Activated CD4-positive, alpha-beta memory T cell treated with anti-CD3 and anti-CD28 coated beads for 36 hours (primary cell): ENCODE measurements at regions of chr9 and their contacts with region 1.

Region 1: DNA sequence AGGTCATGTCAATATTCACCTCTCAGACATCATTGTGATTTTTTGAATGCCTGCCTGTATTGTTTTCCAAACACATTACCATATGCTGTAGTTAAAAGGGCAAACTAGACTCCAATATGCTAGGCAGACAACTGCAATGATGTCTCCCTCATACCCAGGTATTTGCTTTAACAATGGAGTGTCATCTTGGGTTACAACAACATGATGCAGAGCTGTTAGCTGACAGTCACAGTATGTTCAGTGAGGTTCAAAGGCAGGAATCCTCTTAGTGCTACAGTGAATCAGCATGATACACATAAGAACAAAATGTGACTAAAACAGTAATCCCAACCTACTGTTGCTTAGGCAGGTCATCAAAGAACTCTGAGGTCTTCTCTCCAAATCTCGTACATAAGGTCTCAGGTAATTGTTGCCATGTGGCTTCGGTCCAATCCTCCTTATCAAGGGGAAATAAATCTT is 24.0 kb downstream of the OR1J1 start:
- DNase-seq: no peak
- H3K4me3 Mint-ChIP-seq: no peak overlapping the region
- H3K27ac Mint-ChIP-seq: no peak overlapping the region
- H3K4me1 Mint-ChIP-seq: no peaks in the 10 kb centered on the region
- H3K27me3 Mint-ChIP-seq: peaks cover 8% of the 10 kb centered on the region

Region 2: DNA sequence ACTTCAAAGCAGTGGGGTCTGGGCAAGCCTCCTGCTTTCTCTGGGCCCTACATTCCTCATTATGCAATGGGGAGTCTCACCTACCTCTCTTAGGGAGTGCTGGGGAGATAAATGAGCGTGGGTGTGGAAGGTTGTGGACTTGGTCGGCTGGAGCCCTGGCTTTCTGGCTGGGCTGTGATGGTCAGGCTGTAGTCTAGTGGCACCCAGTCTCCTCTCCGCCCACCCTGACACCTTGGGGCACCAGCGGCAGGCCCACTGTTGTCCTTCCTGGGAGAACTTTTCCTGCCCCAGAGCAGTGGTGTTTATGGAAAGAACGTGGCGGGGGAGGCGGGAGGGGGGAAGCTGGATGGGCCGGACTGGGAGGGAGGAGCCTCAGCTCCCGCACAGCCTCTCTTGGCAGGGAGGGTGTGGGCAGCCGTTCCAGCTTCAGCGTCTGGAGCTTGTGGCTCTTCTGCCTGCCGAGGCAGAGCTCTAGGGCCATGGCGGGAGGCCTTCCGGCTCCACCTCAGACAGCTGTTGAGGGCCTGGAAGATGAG is 78.8 kb before region 1 on chr9:
- CTCF ChIA-PET with region 1: no interaction called
- POLR2A ChIA-PET with region 1: no interaction called
- intact Hi-C with region 1: loop called (anchors 5 kb)
- DNase-seq: no peak
- H3K4me3 Mint-ChIP-seq: no peak overlapping the region
- H3K27ac Mint-ChIP-seq: no peak overlapping the region
- H3K4me1 Mint-ChIP-seq: peaks cover 9% of the 10 kb centered on the region
- H3K27me3 Mint-ChIP-seq: peaks cover 23% of the 10 kb centered on the region

Region 3: DNA sequence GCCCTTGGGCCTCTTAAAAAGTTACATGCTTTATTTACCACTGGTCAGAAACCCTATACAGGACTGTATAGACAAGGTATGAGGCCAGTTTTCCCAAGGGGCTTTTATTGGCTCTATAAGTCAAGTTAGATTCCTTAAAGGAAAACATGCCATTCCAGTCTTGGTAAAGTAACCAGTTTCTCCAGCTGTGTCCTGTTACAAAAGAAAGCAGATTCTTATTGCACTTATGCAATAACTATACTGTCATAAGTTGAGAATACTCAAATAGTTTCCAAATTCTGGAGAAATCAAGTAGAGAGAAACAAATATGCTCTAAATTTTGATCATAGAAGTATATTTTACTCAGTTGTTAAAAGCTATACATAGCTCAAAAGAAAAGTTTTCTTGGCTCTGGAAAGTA is 35.7 kb before region 1 on chr9:
- CTCF ChIA-PET with region 1: no interaction called
- POLR2A ChIA-PET with region 1: no interaction called
- intact Hi-C with region 1: no loop called
- DNase-seq: no peak
- H3K4me3 Mint-ChIP-seq: no peak overlapping the region
- H3K27ac Mint-ChIP-seq: no peak overlapping the region
- H3K4me1 Mint-ChIP-seq: no peaks in the 10 kb centered on the region
- H3K27me3 Mint-ChIP-seq: peaks cover 27% of the 10 kb centered on the region